Activated CD8-positive, alpha-beta T cell treated with anti-CD3 and anti-CD28 coated beads for 36 hours (primary cell): ENCODE measurements at regions of chr6 and their contacts with region 1.

Region 1: GRCh38 chr6:110958329-110959192 is at the start of gene GTF3C6:
- DNase-seq: peak; percentile 97
- ATAC-seq: peak; percentile 99
- H3K4me3 Mint-ChIP-seq: peak within 1 kb of the TSS; percentile 93
- H3K27ac Mint-ChIP-seq: peak within 1 kb of the TSS; percentile 99
- H3K4me1 Mint-ChIP-seq: peaks cover 15% of the 10 kb centered on the region
- H3K27me3 Mint-ChIP-seq: no peaks in the 10 kb centered on the region
- CTCF ChIP-seq: no peak
- total RNA-seq, gene GTF3C6: 87.5 to 89.9 TPM

Region 2: GRCh38 chr6:110512979-110513378 is 445.6 kb before region 1 on chr6:
- CTCF ChIA-PET with region 1: no interaction called
- POLR2A ChIA-PET with region 1: no interaction called
- intact Hi-C with region 1: no loop called
- DNase-seq: no peak
- ATAC-seq: no peak
- H3K4me3 Mint-ChIP-seq: no peak overlapping the region
- H3K27ac Mint-ChIP-seq: no peak overlapping the region
- H3K4me1 Mint-ChIP-seq: no peaks in the 10 kb centered on the region
- H3K27me3 Mint-ChIP-seq: peaks cover 6% of the 10 kb centered on the region
- CTCF ChIP-seq: no peak

Region 3: DNA sequence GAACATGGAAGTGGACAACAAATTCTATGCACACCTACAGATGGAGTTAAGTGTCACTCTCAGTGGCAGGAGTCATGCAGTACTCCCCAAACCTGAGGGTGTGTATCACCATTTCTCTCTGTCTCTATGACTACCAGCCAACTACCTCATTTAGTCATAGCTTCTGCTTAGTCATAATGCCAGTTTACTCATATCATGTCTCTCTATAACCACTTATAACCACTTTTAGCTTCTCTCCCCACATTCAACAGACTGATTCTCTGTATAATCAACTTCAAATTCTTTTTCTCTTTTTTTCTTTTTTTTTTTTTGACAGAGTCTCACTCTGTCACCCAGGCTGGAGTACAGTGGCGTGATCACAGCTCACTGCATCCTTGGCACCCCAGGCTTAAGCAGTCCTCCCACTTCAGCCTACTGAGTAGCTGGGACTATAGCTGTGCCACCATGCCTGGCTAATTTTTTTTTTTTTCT is 13.8 kb before region 1 on chr6:
- CTCF ChIA-PET with region 1: interaction called, 16 read pairs
- POLR2A ChIA-PET with region 1: interaction called, 20 read pairs
- intact Hi-C with region 1: no loop called
- DNase-seq: peak; percentile 67
- ATAC-seq: peak; percentile 98
- H3K4me3 Mint-ChIP-seq: no peak overlapping the region
- H3K27ac Mint-ChIP-seq: peak overlapping the region; percentile 70
- H3K4me1 Mint-ChIP-seq: peaks cover 7% of the 10 kb centered on the region
- H3K27me3 Mint-ChIP-seq: no peaks in the 10 kb centered on the region
- CTCF ChIP-seq: no peak

Region 4: GRCh38 chr6:110971468-110971867 is 12.9 kb after region 1 on chr6:
- CTCF ChIA-PET with region 1: interaction called, 4 read pairs
- POLR2A ChIA-PET with region 1: interaction called, 12 read pairs
- intact Hi-C with region 1: no loop called
- DNase-seq: no peak
- ATAC-seq: no peak
- H3K4me3 Mint-ChIP-seq: no peak overlapping the region
- H3K27ac Mint-ChIP-seq: no peak overlapping the region
- H3K4me1 Mint-ChIP-seq: peaks cover 3% of the 10 kb centered on the region
- H3K27me3 Mint-ChIP-seq: no peaks in the 10 kb centered on the region
- CTCF ChIP-seq: no peak

Region 5: GRCh38 chr6:110981202-110981600 is 22.6 kb after region 1 on chr6:
- CTCF ChIA-PET with region 1: no interaction called
- POLR2A ChIA-PET with region 1: interaction called, 19 read pairs
- intact Hi-C with region 1: no loop called
- DNase-seq: no peak
- ATAC-seq: no peak
- H3K4me3 Mint-ChIP-seq: peak overlapping the region; percentile 97
- H3K27ac Mint-ChIP-seq: peak overlapping the region; percentile 97
- H3K4me1 Mint-ChIP-seq: peaks cover 40% of the 10 kb centered on the region
- H3K27me3 Mint-ChIP-seq: no peaks in the 10 kb centered on the region
- CTCF ChIP-seq: no peak

Region 6: GRCh38 chr6:110999634-111000270 is 41.2 kb after region 1 on chr6:
- CTCF ChIA-PET with region 1: no interaction called
- POLR2A ChIA-PET with region 1: no interaction called
- intact Hi-C with region 1: no loop called
- DNase-seq: no peak
- ATAC-seq: no peak
- H3K4me3 Mint-ChIP-seq: no peak overlapping the region
- H3K27ac Mint-ChIP-seq: no peak overlapping the region
- H3K4me1 Mint-ChIP-seq: no peaks in the 10 kb centered on the region
- H3K27me3 Mint-ChIP-seq: no peaks in the 10 kb centered on the region
- CTCF ChIP-seq: peak; percentile 32